ENCODE measurements at regions of chr5 and their contacts with region 1.

Region 1: DNA sequence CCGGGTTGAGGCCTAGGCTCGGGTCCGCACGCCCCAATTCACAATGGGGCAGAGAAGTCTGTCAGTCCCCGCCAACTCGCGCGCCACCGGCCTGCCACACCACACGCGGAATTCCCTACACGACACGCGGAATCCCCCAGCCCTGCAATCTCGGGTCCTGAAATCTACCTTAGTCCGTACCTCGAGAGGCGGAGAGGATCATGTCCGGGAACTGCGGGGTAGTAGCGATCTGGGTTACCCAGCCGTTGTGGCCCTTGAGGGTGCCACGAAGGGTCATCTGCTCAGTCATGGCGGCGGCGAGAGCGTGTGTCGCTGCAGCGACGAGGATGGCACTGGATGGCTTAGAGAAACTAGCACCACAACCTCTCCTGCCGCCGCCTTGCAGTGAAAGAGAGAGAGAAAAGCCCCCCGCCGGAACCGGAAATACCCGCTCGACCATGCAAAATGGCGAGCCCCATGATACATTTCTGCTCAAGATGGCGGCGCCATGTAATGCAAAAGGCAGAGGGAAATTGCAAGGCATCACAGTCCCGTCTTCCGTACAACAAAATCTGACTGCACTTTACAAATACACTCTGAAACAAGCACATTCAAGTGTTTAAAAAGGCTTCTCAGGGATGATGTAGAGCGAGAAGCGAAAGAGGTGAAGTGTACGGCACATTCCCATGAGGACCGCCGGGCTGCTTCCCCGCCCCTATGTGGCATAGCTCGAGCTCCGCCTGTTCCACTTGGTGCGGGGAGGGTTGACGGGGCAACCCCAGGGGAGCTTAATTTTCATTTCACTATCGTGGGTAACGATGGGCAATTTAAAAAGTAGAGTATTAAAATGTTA is at the start of gene RACK1:
- DNase-seq: peak; percentile 87
- ATAC-seq: peak; percentile 51
- H3K4me3 ChIP-seq: peak within 1 kb of the TSS; percentile 91 to 94 (median 92)
- H3K27ac ChIP-seq: peak within 1 kb of the TSS; percentile 98
- H3K4me1 ChIP-seq: peaks cover 39% of the 10 kb centered on the region
- H3K27me3 ChIP-seq: no peaks in the 10 kb centered on the region; a peak in 1 of 5 replicates
- CTCF ChIP-seq: peak; percentile 25
- EP300 ChIP-seq: no peak
- POLR2A ChIP-seq: peak; percentile 96
- RAD21 ChIP-seq: no peak
- total RNA-seq, gene RACK1: 2,514 and 3,226 TPM in 2 replicates

Region 2: DNA sequence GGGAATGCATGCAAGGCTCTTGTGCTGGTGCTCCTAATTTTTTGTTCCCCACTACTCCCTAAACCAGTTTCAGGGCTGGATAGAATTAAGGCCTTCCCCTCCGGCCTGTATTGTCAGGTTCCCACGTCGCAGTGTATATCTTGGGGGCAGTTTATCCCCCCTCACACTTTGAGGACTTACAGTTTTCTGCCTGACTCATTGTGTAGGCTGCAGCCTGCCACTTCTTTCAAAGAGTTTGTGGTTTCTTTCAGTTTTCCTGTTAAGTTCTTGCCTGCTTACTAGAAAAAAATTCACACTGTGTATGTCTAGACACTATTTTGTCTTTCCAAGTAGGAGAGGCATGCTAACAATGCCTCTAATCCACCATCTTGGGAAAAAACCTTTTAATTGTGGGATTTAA is 283.5 kb before region 1 on chr5:
- CTCF ChIA-PET with region 1: no interaction called
- POLR2A ChIA-PET with region 1: no interaction called
- in situ Hi-C with region 1: no loop called
- intact Hi-C with region 1: no loop called
- DNase-seq: no peak
- ATAC-seq: no peak
- H3K4me3 ChIP-seq: no peak overlapping the region
- H3K27ac ChIP-seq: no peak overlapping the region
- H3K4me1 ChIP-seq: no peaks in the 10 kb centered on the region
- H3K27me3 ChIP-seq: no peaks in the 10 kb centered on the region
- CTCF ChIP-seq: no peak
- EP300 ChIP-seq: no peak
- POLR2A ChIP-seq: no peak
- RAD21 ChIP-seq: no peak

Region 3: DNA sequence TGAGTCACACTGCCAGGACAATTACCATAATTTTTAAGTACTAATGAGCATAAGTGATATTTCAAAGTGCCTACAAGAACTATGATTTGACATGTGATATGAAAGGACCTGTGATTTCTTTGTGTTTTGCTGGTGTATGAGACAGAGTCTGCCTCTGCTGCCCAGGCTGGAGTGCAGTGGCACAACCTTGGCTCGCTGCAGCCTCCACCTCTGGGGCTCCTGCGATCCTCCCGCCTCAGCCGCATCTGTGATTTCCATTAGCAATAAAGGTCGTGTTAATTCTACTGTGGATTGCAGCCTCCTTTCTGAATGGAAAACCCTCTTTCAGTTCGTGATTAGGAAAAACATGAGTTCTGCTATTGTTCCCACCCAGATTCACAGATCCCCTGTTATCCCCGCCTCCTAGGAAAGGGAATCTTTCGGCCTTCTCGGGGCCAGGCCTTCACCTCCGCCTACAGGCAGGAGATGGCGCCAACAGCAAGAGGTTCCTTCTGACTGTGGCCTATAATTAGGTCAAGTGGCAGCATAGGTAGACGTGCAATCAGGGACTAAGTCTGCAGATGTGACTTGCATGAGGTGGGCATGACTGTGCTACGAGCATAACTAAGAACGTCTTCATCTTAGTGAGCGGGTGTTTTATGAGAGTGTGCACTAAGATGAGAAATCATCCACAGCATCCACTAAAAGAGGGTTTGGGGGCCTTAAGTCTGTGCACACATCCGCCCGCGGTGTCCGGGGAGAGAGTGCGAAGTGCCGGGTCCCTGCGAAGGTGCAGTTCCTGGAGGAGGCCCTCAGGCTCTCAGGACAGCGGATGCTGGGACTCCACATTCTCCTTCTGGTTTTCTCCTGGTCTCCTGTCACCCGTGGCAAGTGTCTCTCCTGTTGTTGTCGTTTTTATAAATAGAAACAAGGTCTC is 61.8 kb before region 1 on chr5:
- CTCF ChIA-PET with region 1: no interaction called
- POLR2A ChIA-PET with region 1: interaction called, 14 read pairs
- in situ Hi-C with region 1: no loop called
- intact Hi-C with region 1: no loop called
- DNase-seq: peak; percentile 74
- ATAC-seq: peak; percentile 79
- H3K4me3 ChIP-seq: peak overlapping the region in 2 of 3 experiments; percentile 25 to 46; a peak in 1 of 6 replicates
- H3K27ac ChIP-seq: no peak overlapping the region
- H3K4me1 ChIP-seq: peaks cover 58% of the 10 kb centered on the region
- H3K27me3 ChIP-seq: no peaks in the 10 kb centered on the region
- CTCF ChIP-seq: peak; percentile 95
- EP300 ChIP-seq: no peak
- POLR2A ChIP-seq: no peak
- RAD21 ChIP-seq: peak; percentile 55

Region 4: GRCh38 chr5:181191529-181192394 is 52.0 kb before region 1 on chr5:
- CTCF ChIA-PET with region 1: no interaction called
- POLR2A ChIA-PET with region 1: interaction called, 13 read pairs
- in situ Hi-C with region 1: no loop called
- intact Hi-C with region 1: no loop called
- DNase-seq: peak; percentile 88
- ATAC-seq: peak; percentile 65
- H3K4me3 ChIP-seq: peak overlapping the region; percentile 80 to 93 (median 81)
- H3K27ac ChIP-seq: peak overlapping the region; percentile 81
- H3K4me1 ChIP-seq: peaks cover 28% of the 10 kb centered on the region
- H3K27me3 ChIP-seq: no peaks in the 10 kb centered on the region; a peak in 1 of 5 replicates
- CTCF ChIP-seq: peak; percentile 53
- EP300 ChIP-seq: 0 out of 4 replicates have a peak, but pooled peaks of 1 of the 2 experiments have one; percentile 10
- POLR2A ChIP-seq: peak in 1 of 2 experiments; percentile 51; a peak in 1 of 4 replicates
- RAD21 ChIP-seq: 0 out of 2 replicates have a peak, but pooled peaks have one; percentile 13

Region 5: GRCh38 chr5:181207214-181208107 is 36.3 kb before region 1 on chr5:
- CTCF ChIA-PET with region 1: no interaction called
- POLR2A ChIA-PET with region 1: interaction called, 18 read pairs
- in situ Hi-C with region 1: no loop called
- intact Hi-C with region 1: no loop called
- DNase-seq: peak; percentile 82
- ATAC-seq: peak; percentile 30
- H3K4me3 ChIP-seq: peak overlapping the region; percentile 54 to 82 (median 61)
- H3K27ac ChIP-seq: peak overlapping the region; percentile 51
- H3K4me1 ChIP-seq: peaks cover 29% of the 10 kb centered on the region
- H3K27me3 ChIP-seq: peaks cover 2 to 35% of the 10 kb centered on the region in 2 experiments; a peak in 4 of 5 replicates
- CTCF ChIP-seq: no peak
- EP300 ChIP-seq: no peak
- POLR2A ChIP-seq: no peak
- RAD21 ChIP-seq: no peak

Region 6: DNA sequence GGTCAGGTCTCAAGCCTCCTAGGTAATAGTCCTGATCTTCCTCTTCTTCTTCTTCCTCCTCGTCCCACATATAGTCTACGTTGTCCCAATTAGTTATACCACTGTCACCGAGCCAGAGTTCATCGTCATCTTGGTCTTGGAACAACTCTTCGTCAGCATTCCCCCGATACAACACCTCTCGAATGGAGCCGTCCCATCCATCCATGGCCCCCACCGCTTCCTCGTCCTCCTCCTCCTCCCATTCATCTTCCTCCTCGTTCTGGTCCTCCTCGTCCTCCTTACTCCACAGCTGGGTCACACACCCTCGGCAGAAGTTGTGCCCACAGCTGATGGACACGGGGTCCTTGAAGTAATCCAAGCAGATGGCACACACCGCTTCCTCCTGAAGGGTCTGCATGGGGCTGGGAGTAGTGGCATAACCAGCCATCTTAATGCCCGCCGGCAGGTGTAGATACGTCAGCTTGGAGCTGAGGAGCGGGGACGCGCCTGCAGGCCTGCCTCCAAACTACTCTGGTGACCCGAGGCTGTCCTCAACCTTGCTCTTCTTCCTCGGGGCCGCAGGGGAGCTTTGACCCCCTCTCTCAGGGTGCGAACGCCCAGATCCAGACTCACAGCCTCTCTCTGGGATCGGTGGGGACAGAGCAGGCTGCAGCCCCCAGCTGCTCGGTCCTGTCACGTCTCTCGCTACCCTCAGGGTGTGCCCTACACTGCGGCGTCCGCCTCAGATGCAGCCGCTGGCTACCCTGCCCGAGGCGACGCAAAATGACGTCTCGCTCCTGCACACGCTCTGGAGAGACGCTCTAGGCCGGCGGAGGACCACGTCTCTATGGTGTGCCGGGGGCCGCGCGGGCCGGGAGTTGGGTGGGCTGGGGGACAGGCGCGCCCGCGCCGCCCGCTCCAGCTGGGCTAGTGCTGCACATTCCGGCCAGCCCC is 16.9 kb after region 1 on chr5 and contains the start of gene TRIM52:
- CTCF ChIA-PET with region 1: no interaction called
- POLR2A ChIA-PET with region 1: interaction called, 102 read pairs
- in situ Hi-C with region 1: no loop called
- intact Hi-C with region 1: loop called (anchors 2 kb)
- DNase-seq: peak; percentile 91
- ATAC-seq: peak; percentile 93
- H3K4me3 ChIP-seq: peak within 1 kb of the TSS; percentile 86 to 97 (median 94)
- H3K27ac ChIP-seq: peak within 1 kb of the TSS; percentile 90
- H3K4me1 ChIP-seq: peaks cover 42% of the 10 kb centered on the region
- H3K27me3 ChIP-seq: no peaks in the 10 kb centered on the region; a peak in 1 of 5 replicates
- CTCF ChIP-seq: peak; percentile 49
- EP300 ChIP-seq: 0 out of 4 replicates have a peak, but pooled peaks of 1 of the 2 experiments have one; percentile 10
- POLR2A ChIP-seq: peak; percentile 89 to 99
- RAD21 ChIP-seq: peak; percentile 59; the same call in 1 of the 2 replicates
- total RNA-seq, gene TRIM52: 5.7 and 7.2 TPM in 2 replicates